ENCODE measurements at regions of chr19 and their contacts with region 1.

Region 1: GRCh38 chr19:16572332-16573211 is at the start of gene SLC35E1:
- DNase-seq: peak; percentile 99
- H3K4me3 ChIP-seq: peak within 1 kb of the TSS; percentile 68 to 97 (median 72)
- H3K27ac ChIP-seq: peak within 1 kb of the TSS; percentile 78 to 91 (median 86)
- H3K4me1 ChIP-seq: peaks cover 29 to 79% (median 48%) of the 10 kb centered on the region in 4 donors
- H3K27me3 ChIP-seq: no peaks in the 10 kb centered on the region
- CTCF ChIP-seq: no peak
- EP300 ChIP-seq: no peak
- POLR2A ChIP-seq: peak; percentile 51
- total RNA-seq, gene SLC35E1: 22.8 to 39.7 (median 34.0) TPM

Region 2: DNA sequence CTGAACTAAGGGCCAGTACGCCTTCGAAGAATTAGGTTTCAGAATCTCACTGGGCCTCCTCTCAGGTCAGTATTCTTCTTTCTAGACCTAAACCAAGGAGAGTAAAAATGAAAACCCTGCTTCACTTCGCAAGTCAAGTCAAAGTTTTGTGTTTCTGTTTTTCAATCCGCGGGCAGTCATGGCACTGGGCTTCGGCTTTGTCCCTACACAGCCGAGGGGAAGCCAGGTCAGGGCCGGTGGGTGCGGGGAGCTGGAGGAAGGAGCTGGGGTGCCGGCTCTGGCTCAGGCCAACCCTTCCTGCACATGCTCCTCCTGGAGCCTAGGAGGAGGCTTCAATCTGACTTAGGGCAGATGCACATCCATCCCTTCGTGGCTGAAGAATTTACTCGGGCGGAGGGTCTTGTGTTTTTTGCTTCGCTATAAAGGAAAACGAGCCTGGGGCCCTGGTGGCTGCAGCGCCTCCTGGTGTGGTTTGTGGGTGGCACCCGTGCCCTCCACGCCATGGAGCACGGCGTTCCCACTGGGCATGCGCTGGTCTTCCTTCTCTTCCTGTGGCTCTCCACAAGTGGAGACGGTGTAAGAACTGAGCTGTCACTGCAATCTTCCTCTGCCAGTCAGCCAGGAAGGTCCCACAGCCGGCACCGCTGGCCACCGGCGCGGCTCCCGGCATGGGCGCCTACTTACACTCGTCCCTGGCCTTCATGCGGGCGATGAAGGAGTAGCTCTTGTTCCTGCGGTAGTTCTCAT is 53.9 kb before region 1 on chr19:
- intact Hi-C with region 1: no loop called
- DNase-seq: no peak
- H3K4me3 ChIP-seq: no peak overlapping the region
- H3K27ac ChIP-seq: no peak overlapping the region
- H3K4me1 ChIP-seq: no peaks in the 10 kb centered on the region
- H3K27me3 ChIP-seq: no peaks in the 10 kb centered on the region
- CTCF ChIP-seq: no peak
- EP300 ChIP-seq: no peak
- POLR2A ChIP-seq: no peak

Region 3: GRCh38 chr19:16628183-16628983 is 55.8 kb after region 1 on chr19 and contains the start of gene MED26:
- intact Hi-C with region 1: loop called (anchors 5 kb)
- DNase-seq: peak; percentile 98
- H3K4me3 ChIP-seq: peak within 1 kb of the TSS; percentile 78 to 99 (median 95)
- H3K27ac ChIP-seq: peak within 1 kb of the TSS; percentile 89 to 98 (median 97)
- H3K4me1 ChIP-seq: peaks cover 38 to 56% (median 51%) of the 10 kb centered on the region in 4 donors
- H3K27me3 ChIP-seq: no peaks in the 10 kb centered on the region
- CTCF ChIP-seq: peak in 2 of 3 experiments; percentile 5 to 35
- EP300 ChIP-seq: no peak
- POLR2A ChIP-seq: peak; percentile 46
- total RNA-seq, gene MED26: 4.2 to 11.7 (median 8.8) TPM

Region 4: GRCh38 chr19:16849177-16849576 is 276.6 kb after region 1 on chr19:
- intact Hi-C with region 1: no loop called
- DNase-seq: no peak
- H3K4me3 ChIP-seq: no peak overlapping the region
- H3K27ac ChIP-seq: no peak overlapping the region
- H3K4me1 ChIP-seq: no peaks in the 10 kb centered on the region
- H3K27me3 ChIP-seq: no peaks in the 10 kb centered on the region
- CTCF ChIP-seq: no peak
- EP300 ChIP-seq: no peak
- POLR2A ChIP-seq: no peak

Measured in esophagus muscularis mucosa (tissue), 4 donors.